CD4-positive, alpha-beta memory T cell (primary cell): ENCODE measurements at regions of chr7 and their contacts with region 1.

Region 1: DNA sequence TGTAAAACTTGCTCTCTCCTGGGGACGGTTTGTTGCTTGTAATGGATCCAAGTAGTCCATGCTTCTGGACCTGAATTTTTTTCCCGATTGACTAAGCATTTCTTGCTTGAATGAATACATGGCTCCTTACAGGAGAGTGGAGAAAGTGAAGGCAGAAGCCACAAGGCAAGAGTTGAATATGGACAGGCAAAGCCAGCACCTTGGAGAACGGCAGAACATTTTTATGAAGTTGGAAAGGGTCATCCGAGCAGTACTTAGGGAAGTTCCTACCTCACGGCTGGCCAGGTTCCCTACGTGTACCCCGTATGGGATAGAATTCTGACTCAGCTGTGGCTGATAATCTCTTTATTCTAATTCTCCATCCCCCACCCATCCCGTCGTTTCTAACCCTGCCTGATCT is 50.6 kb upstream of the MGAM2 start:
- DNase-seq: no peak
- H3K4me3 ChIP-seq: no peak overlapping the region
- H3K4me3 Mint-ChIP-seq: no peak overlapping the region
- H3K27ac ChIP-seq: no peak overlapping the region
- H3K27ac Mint-ChIP-seq: no peak overlapping the region
- H3K4me1 ChIP-seq: no peaks in the 10 kb centered on the region
- H3K4me1 Mint-ChIP-seq: no peaks in the 10 kb centered on the region
- H3K27me3 ChIP-seq: no peaks in the 10 kb centered on the region
- H3K27me3 Mint-ChIP-seq: peaks cover 2 to 3% of the 10 kb centered on the region in 2 donors

Region 2: DNA sequence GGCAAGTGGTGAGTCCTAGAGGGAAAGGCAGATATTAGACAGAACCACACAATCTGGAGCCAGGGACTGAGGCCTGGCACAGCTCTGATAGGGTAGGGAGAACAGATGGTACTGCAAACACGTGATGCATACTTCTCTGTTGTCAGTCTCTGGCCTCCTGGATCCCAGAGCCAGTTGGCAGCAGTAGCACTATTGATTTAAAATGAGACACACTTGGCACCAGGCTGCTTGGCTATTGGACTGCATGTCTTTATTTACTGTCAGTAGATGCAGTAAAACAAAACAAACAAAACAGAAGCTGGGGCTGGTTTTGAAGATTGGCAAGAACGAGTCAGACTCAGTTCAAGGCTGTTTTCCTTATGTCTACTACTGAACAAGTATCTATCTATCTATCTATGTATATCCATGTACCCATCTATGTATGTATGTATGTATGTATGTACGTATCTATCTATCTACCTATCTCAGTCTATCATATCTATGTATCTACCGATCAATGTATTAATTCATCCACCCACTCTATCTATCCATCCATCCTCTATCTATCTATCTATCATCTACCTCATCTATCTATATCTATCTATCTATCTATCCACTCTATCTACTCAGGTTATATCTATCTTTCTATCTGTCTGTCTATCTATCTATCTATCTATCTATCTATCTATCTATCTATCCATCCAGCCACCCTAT is 27.2 kb after region 1 on chr7:
- CTCF ChIA-PET with region 1: no interaction called
- POLR2A ChIA-PET with region 1: no interaction called
- intact Hi-C with region 1: loop called (anchors 1 kb)
- DNase-seq: no peak
- H3K4me3 ChIP-seq: no peak overlapping the region
- H3K4me3 Mint-ChIP-seq: no peak overlapping the region
- H3K27ac ChIP-seq: no peak overlapping the region
- H3K27ac Mint-ChIP-seq: peak overlapping the region in 1 of 7 donors; percentile 2
- H3K4me1 ChIP-seq: no peaks in the 10 kb centered on the region
- H3K4me1 Mint-ChIP-seq: no peaks in the 10 kb centered on the region
- H3K27me3 ChIP-seq: no peaks in the 10 kb centered on the region
- H3K27me3 Mint-ChIP-seq: peaks cover 2 to 3% of the 10 kb centered on the region in 2 donors